Body of pancreas (tissue), 4 donors: ENCODE measurements at regions of chr10 and their contacts with region 1.

Region 1: DNA sequence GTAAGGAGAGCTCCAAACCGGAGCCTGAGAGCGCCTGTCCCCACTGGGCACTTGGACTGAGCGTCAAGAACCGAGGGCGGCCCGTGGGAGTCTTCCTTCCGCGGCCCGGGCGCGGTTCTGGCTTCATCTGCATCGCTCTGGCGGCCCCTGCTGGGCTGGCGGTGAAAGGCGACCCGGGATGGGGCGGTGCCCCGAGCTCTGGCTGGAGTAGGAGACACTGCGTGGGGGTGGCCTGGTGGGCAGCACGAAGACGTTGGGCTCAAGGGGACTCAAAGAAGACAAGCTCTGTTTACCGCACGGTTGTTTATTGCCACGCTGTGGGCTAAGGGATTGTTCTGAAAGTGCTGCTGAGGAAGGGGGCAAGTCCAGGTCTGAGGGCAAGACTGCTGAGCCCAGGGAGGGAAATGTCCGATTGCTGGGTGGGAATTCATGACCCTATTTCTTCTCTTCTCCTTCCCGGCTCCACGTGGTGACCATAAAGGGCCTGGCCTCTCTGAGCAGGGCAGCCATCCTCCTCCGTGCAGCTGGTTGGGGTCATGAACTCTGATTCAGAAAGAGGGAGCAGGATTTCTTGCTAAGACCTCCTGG is 29.8 kb downstream of the PLAU start:
- DNase-seq: peak; percentile 81 to 88 (median 84)
- ATAC-seq: peak; percentile 94
- H3K4me3 ChIP-seq: no peak overlapping the region
- H3K27ac ChIP-seq: no peak overlapping the region
- H3K4me1 ChIP-seq: peaks cover 6% of the 10 kb centered on the region
- H3K27me3 ChIP-seq: no peaks in the 10 kb centered on the region
- CTCF ChIP-seq: peak; percentile 76 to 95 (median 92)
- POLR2A ChIP-seq: peak in 2 of 3 donors; percentile 18 to 34

Region 2: GRCh38 chr10:73886085-73886529 is 54.6 kb before region 1 on chr10:
- intact Hi-C with region 1: loop called (anchors 5 kb)
- DNase-seq: peak; percentile 69 to 81 (median 74)
- ATAC-seq: peak; percentile 86
- H3K4me3 ChIP-seq: no peak overlapping the region
- H3K27ac ChIP-seq: peak overlapping the region; percentile 32 to 81 (median 68)
- H3K4me1 ChIP-seq: peaks cover 32% of the 10 kb centered on the region
- H3K27me3 ChIP-seq: no peaks in the 10 kb centered on the region
- CTCF ChIP-seq: peak; percentile 48 to 90 (median 85)
- POLR2A ChIP-seq: no peak